ENCODE measurements at regions of chr9 and their contacts with region 1.

Region 1: GRCh38 chr9:136138566-136138965 is 19.9 kb upstream of the TMEM250 start:
- DNase-seq: no peak
- H3K4me3 ChIP-seq: no peak overlapping the region
- CTCF ChIP-seq: peak; percentile 47

Region 2: DNA sequence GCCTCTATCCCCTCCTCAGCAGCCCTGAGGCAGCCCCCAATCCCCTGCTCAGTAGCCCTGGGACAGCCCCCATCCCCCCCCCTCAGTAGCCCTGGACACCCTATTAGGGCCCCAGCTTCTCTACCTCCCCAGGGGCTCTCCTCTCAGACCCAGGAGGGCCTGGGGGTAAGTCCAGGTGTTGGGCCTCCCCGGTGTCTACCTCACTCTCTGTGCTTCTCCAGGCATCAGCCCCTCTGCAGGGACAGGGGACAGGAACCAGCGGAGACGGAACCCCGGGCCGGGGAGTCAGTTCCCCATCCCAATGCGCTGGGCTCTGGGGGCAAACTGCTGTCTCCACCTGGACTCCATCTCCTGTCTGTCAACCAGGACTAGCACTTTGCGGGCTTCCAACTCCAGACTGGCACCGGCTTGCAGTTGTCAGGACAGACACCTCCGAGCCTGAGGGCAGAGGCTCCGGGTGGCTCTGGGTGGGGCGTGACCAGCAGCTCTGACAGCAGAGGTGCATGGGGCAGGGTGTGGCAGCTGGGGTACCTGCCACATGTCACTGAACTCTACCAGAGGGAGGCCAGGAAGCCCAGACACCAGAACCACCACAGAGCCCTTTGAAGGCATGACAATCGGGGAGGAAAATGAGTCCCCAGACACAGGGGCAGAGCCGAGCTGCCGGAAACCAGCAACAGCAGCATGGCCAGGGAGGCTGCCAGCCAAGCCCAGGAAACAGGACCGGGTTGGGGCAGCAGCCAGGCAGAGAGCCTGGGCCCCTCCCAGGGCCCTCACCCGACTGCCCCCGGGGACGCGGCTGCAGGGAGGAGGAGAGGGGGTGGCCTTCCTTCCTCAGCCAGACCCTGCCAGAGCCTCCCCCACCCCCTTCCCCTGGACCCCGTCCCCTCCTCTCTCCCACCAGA is 159.7 kb before region 1 on chr9:
- in situ Hi-C with region 1: loop called (anchors 5 kb)
- DNase-seq: no peak
- H3K4me3 ChIP-seq: no peak overlapping the region
- CTCF ChIP-seq: no peak

Region 3: DNA sequence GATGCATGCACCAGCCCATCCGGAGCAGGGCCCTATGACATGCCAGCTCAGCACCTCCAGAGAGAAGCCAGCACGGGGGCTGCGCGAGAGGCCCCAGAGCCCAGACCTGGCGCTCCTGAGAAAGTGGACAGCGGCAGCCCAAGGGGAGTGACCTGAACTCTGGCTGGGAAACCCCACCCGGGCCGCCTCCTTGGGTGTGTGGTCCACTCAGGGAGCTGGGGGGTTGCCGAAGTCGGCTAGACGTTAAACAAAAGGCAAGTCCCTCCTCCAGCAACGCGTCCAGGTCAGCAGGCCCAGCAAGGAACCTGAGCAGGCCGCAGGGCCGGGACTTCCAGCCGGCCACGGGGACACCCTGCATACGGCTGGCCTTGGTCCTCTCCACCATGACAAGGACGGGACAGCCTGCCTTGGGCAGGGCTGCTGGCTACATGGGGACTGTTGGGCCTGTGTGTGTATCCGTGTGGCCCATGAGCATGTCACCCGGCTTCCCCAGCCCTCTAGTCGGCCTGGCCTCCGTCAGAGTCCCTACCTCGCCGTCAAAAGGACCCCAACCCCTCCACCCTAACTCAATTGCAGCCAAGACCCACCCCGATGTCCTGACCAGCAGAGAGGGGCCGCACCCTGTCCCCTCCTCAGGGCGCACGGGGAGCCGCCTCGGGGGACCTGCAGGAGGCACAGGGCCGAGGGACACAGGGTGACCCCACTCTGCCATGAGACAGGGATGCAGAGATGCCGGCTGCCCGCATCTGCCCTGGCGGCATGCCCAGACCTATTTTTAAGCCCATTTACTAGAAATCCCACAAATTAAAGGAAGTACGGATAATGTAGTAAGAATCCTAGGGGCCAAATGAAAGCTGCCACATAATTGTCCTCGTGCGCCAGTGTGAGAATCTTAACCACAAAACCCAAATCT is 79.0 kb before region 1 on chr9:
- in situ Hi-C with region 1: loop called (anchors 5 kb)
- DNase-seq: peak; percentile 67
- H3K4me3 ChIP-seq: no peak overlapping the region
- CTCF ChIP-seq: no peak

Region 4: GRCh38 chr9:136189394-136190236 is 51.0 kb after region 1 on chr9:
- in situ Hi-C with region 1: loop called (anchors 5 kb)
- DNase-seq: no peak
- H3K4me3 ChIP-seq: no peak overlapping the region
- CTCF ChIP-seq: no peak

Region 5: GRCh38 chr9:136275655-136276429 is 137.3 kb after region 1 on chr9:
- in situ Hi-C with region 1: loop called (anchors 5 kb)
- DNase-seq: no peak
- H3K4me3 ChIP-seq: no peak overlapping the region
- CTCF ChIP-seq: no peak

Measured in astrocyte of the cerebellum (primary cell).